Right cardiac atrium (tissue), 5 donors: ENCODE measurements at regions of chr18 and their contacts with region 1.

Region 1: GRCh38 chr18:3447895-3448837 is 1.8 kb upstream of the TGIF1 start:
- DNase-seq: peak; percentile 96 to 97 (median 97)
- ATAC-seq: peak; percentile 89 to 92
- H3K4me3 ChIP-seq: peak overlapping the region; percentile 92
- H3K27ac ChIP-seq: peak overlapping the region; percentile 97
- H3K4me1 ChIP-seq: peaks cover 3% of the 10 kb centered on the region
- H3K27me3 ChIP-seq: no peaks in the 10 kb centered on the region

Region 2: DNA sequence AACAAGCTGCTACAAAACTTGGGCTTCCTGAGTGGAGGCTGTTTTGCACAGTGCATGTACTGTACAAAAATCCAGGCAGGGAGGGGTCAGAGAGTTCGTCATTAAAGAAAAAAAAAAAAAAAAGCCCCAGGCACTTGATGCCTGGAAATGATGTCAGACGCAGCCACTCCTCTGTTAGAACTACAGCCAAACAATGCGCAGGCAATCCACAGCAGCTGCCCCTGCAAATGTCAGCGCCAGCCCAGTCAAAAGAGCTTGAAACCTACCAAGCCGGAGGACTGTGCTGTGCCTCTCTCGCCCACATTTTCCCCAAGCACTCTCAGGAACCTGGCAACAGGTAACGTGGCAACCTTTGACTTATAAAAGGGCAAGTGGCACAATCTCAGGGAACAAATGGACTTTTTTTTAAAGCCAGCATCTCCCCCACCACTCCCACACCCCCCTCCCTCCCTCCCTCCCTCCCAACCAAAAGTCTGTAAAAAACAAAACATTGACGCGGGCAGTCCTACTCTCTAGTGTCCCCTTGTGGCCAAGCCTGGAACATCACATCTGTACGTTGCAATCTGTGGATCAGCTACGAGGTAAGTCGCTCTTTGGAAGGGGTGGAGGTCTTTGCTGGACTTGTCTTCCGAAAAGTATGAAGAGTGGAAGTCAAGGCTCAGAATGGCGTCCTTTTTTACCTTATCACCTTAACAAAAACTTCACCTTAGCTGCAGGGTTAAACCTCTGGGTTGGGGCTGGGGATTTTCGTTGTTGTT is 145.9 kb after region 1 on chr18:
- intact Hi-C with region 1: loop called in 3 of 4 experiments (anchors 2 to 10 kb)
- DNase-seq: peak; percentile 88 to 93 (median 88)
- ATAC-seq: peak; percentile 87
- H3K4me3 ChIP-seq: peak overlapping the region; percentile 49
- H3K27ac ChIP-seq: peak overlapping the region; percentile 99
- H3K4me1 ChIP-seq: peaks cover 16% of the 10 kb centered on the region
- H3K27me3 ChIP-seq: no peaks in the 10 kb centered on the region

Region 3: DNA sequence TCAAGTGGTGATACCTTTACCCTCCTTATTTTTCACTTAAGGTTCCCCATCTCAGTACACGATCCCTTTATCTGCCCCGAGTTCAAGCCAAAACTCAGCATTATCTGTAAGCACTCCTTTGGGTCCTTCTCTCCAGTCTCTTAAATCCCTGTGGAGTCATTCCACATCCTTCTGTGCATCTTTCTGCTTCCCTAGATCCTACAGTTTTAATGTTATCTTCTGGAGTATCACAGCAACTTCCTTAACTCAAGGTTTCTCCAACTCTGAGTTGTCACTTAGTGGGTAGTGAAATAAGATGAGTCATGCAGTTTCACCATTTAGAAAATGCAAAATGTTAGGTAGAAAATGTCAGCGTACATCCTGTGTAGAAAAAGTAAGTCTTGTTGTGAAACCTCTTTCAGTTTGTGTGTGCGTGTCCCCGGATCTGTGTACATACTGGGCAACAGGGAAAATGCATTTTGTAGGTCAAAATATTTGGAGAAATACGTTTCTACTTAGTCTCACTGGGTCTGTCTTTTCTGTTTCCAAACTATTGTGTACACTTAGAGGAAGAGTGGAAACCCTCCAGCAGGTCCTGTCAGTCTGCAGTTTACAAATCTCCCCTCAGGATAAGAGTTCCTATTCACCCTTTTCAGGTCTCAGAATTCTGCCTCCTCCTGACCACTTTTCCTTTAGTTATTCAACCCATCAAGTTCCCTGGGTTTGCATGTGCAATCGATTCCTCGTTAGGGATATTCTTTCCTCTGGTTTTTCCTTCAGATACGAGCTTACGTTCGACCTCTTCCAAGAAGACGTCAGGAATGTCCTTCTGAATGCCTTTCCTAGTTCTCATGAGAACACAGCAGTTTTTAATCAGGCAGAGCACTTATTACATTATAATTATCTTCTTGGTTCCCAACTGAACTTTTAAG is 156.6 kb after region 1 on chr18:
- intact Hi-C with region 1: loop called in 2 of 4 experiments (anchors 5 to 10 kb)
- DNase-seq: no peak
- ATAC-seq: peak; percentile 27 to 74
- H3K4me3 ChIP-seq: peak overlapping the region; percentile 74
- H3K27ac ChIP-seq: peak overlapping the region; percentile 89
- H3K4me1 ChIP-seq: peaks cover 6% of the 10 kb centered on the region
- H3K27me3 ChIP-seq: no peaks in the 10 kb centered on the region

Region 4: GRCh38 chr18:3665780-3666525 is 217.8 kb after region 1 on chr18:
- intact Hi-C with region 1: loop called in 3 of 4 experiments (anchors 5 to 10 kb)
- DNase-seq: peak; percentile 74 to 88 (median 85)
- ATAC-seq: peak; percentile 91 to 93
- H3K4me3 ChIP-seq: no peak overlapping the region
- H3K27ac ChIP-seq: peak overlapping the region; percentile 22
- H3K4me1 ChIP-seq: no peaks in the 10 kb centered on the region
- H3K27me3 ChIP-seq: no peaks in the 10 kb centered on the region